A673 (cell line): ENCODE measurements at regions of chrX and their contacts with region 1.

Region 1: GRCh38 chrX:71147496-71148277 is 3.0 kb downstream of the NLGN3 start:
- DNase-seq: no peak
- H3K4me3 ChIP-seq: no peak overlapping the region
- H3K27ac ChIP-seq: no peak overlapping the region
- H3K4me1 ChIP-seq: peaks cover 4% of the 10 kb centered on the region
- H3K27me3 ChIP-seq: no peaks in the 10 kb centered on the region
- CTCF ChIP-seq: no peak

Region 2: GRCh38 chrX:71095543-71095911 is 52.2 kb before region 1 on chrX and contains the start of gene FOXO4:
- CTCF ChIA-PET with region 1: no interaction called
- POLR2A ChIA-PET with region 1: no interaction called
- intact Hi-C with region 1: loop called (anchors 2 kb)
- DNase-seq: peak; percentile 88
- H3K4me3 ChIP-seq: peak within 1 kb of the TSS; percentile 51
- H3K27ac ChIP-seq: no peak within 1 kb of the TSS
- H3K4me1 ChIP-seq: no peaks in the 10 kb centered on the region
- H3K27me3 ChIP-seq: no peaks in the 10 kb centered on the region
- CTCF ChIP-seq: no peak
- total RNA-seq, gene FOXO4: 7.0 and 10.8 TPM in 2 replicates

Region 3: DNA sequence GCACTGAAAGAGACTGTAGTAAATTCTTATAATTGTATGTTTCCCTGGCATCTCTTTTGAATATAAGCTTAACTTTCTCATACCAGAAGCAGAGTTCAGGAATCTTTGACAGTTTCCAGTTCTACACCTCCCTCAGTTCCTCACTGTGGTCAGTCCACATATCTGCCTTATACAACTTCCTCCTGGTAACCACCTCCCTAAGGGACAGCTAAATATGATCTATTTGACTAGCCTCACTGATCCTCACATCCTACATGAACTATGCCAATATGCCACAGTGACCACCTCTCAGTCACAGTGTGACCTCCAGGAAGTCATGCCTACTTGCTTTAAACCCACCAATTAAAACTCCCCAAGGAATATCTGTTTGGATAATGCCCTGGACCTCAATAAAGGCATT is 1476.5 kb after region 1 on chrX:
- CTCF ChIA-PET with region 1: no interaction called
- POLR2A ChIA-PET with region 1: no interaction called
- intact Hi-C with region 1: no loop called
- DNase-seq: no peak
- H3K4me3 ChIP-seq: no peak overlapping the region
- H3K27ac ChIP-seq: no peak overlapping the region
- H3K4me1 ChIP-seq: no peaks in the 10 kb centered on the region
- H3K27me3 ChIP-seq: no peaks in the 10 kb centered on the region
- CTCF ChIP-seq: no peak